MCF 10A (cell line): ENCODE measurements at regions of chr5 and their contacts with region 1.

Region 1: GRCh38 chr5:73812962-73813588 is 187.1 kb downstream of the ARHGEF28 start:
- DNase-seq: peak; percentile 72
- H3K4me3 Mint-ChIP-seq: peak overlapping the region; percentile 85
- H3K27ac Mint-ChIP-seq: peak overlapping the region; percentile 91
- H3K4me1 Mint-ChIP-seq: peaks cover 49% of the 10 kb centered on the region
- H3K27me3 Mint-ChIP-seq: no peaks in the 10 kb centered on the region
- CTCF ChIP-seq: no peak

Region 2: DNA sequence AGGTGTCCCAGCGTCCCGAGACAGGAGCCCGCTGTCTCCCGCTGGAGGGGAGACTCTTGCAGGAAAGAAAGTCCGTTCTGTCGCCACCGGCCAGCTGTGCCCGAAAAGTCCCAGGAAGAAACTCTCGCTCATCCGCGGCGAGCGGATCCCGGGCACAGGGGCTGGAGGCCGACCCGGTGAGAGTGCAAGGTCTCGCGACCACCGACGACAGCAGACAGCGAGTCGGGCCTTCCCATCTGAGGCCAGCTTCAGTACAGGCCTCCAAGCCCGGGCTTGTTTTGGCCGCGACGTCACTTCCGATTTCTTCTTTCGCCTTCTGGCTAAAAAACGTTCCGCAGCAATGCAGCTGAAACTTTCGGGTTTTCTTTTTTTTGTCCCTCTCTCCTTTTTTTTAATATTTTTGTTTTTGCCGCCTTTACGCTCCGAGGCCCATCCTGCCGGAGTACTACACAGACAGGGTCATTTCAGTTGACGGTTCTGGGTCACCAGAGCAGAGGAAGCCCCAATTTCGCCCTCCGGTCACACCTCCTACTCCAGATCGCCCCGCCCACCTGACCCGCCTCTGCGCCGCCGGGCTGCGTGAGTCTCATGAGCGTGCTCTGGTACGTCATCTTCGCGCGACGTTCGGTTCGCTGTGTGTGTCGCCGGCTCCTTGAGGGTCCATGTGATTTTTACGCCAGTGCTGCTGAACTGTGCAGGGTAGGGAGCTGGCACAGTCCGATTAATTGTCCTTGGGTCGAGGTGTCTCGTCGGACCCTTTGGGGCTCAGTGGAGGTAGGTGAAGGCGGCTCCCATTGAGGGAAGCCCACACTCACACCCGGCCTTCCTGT is 247.7 kb before region 1 on chr5 and contains the starts of genes ANKRA2 and UTP15:
- CTCF ChIA-PET with region 1: no interaction called
- POLR2A ChIA-PET with region 1: interaction called, 44 read pairs
- intact Hi-C with region 1: no loop called
- DNase-seq: peak; percentile 99
- H3K4me3 Mint-ChIP-seq: peak within 1 kb of the TSS; percentile 84
- H3K27ac Mint-ChIP-seq: peak within 1 kb of the TSS; percentile 94
- H3K4me1 Mint-ChIP-seq: peaks cover 11% of the 10 kb centered on the region
- H3K27me3 Mint-ChIP-seq: no peaks in the 10 kb centered on the region
- CTCF ChIP-seq: no peak
- total RNA-seq, gene ANKRA2: 19.3 and 20.2 TPM in 2 replicates
- total RNA-seq, gene UTP15: 41.2 and 41.3 TPM in 2 replicates

Region 3: GRCh38 chr5:73625944-73626811 is 186.9 kb before region 1 on chr5 and contains the start of gene ARHGEF28:
- CTCF ChIA-PET with region 1: interaction called, 3 read pairs
- POLR2A ChIA-PET with region 1: interaction called, 14 read pairs
- intact Hi-C with region 1: no loop called
- DNase-seq: peak; percentile 79
- H3K4me3 Mint-ChIP-seq: peak within 1 kb of the TSS; percentile 72
- H3K27ac Mint-ChIP-seq: peak within 1 kb of the TSS; percentile 46
- H3K4me1 Mint-ChIP-seq: peaks cover 34% of the 10 kb centered on the region
- H3K27me3 Mint-ChIP-seq: no peaks in the 10 kb centered on the region
- CTCF ChIP-seq: no peak
- total RNA-seq, gene ARHGEF28: 27.2 and 34.8 TPM in 2 replicates

Region 4: GRCh38 chr5:73801686-73802085 is 11.4 kb before region 1 on chr5:
- CTCF ChIA-PET with region 1: interaction called, 5 read pairs
- POLR2A ChIA-PET with region 1: interaction called, 27 read pairs
- intact Hi-C with region 1: no loop called
- DNase-seq: no peak
- H3K4me3 Mint-ChIP-seq: no peak overlapping the region
- H3K27ac Mint-ChIP-seq: no peak overlapping the region
- H3K4me1 Mint-ChIP-seq: peaks cover 3% of the 10 kb centered on the region
- H3K27me3 Mint-ChIP-seq: no peaks in the 10 kb centered on the region
- CTCF ChIP-seq: no peak

Region 5: GRCh38 chr5:73867345-73868335 is 54.6 kb after region 1 on chr5:
- CTCF ChIA-PET with region 1: no interaction called
- POLR2A ChIA-PET with region 1: no interaction called
- intact Hi-C with region 1: no loop called
- DNase-seq: peak; percentile 37
- H3K4me3 Mint-ChIP-seq: no peak overlapping the region
- H3K27ac Mint-ChIP-seq: no peak overlapping the region
- H3K4me1 Mint-ChIP-seq: no peaks in the 10 kb centered on the region
- H3K27me3 Mint-ChIP-seq: no peaks in the 10 kb centered on the region
- CTCF ChIP-seq: no peak